Activated CD8-positive, alpha-beta T cell treated with anti-CD3 and anti-CD28 coated beads for 36 hours (primary cell): ENCODE measurements at regions of chr5 and their contacts with region 1.

Region 1: DNA sequence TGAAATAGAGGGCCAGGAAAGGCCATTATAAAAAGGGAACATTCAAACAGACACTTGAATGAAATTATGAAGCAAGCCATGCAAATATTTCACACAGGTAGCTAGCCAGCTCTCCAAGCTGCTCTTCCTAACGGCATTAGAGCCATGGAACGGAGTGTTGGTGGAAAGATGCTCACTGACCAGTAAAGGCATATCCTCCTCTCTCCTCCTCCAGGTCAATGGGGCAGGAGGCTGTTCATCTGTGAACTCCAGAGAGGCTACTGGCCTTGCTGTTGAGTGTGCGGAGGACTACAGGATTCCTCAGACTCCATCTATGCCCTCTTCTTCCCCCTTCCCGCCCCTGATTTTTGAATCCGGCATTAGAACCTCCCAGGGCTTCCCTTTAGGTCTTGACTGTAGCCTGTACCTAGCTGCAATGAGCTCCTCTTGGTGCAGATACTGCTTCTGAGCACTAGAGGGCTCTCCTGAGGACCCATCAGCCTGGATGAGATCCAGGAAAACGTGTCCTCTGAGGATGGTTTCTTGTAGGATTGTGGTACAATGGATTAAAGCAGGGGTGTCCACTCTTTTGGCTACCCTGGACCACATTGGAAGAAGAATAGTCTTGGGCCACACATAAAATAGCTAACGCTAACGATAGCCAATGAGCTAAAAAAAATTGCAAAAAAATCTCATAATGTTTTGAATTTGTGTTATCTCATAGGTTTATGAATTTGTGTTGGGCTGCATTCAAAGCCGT is 162.2 kb downstream of the SREK1 start:
- DNase-seq: peak; percentile 43
- ATAC-seq: peak; percentile 82
- H3K4me3 Mint-ChIP-seq: no peak overlapping the region
- H3K27ac Mint-ChIP-seq: no peak overlapping the region
- H3K4me1 Mint-ChIP-seq: no peaks in the 10 kb centered on the region
- H3K27me3 Mint-ChIP-seq: peaks cover 5% of the 10 kb centered on the region
- CTCF ChIP-seq: peak; percentile 80

Region 2: DNA sequence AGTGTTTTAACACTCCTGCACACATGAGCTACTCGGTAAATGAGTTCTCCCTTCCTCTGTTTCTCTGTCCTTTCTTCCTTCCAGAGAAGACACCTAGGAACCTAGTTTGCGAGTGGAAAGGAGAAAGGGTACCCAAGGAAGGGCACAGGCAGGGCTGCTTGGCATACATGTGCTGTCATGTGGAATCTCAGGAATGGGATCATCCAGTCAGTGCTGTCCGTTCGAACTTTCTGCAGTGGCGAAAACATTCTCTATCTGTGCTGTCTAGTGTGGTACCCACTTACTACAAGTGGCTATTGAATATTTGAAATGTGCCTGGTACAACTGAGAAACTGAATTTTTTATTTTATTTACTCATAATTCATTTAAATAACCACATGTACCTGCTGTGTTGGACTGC is 556.3 kb before region 1 on chr5:
- CTCF ChIA-PET with region 1: no interaction called
- POLR2A ChIA-PET with region 1: no interaction called
- intact Hi-C with region 1: no loop called
- DNase-seq: no peak
- ATAC-seq: no peak
- H3K4me3 Mint-ChIP-seq: no peak overlapping the region
- H3K27ac Mint-ChIP-seq: no peak overlapping the region
- H3K4me1 Mint-ChIP-seq: peaks cover 4% of the 10 kb centered on the region
- H3K27me3 Mint-ChIP-seq: no peaks in the 10 kb centered on the region
- CTCF ChIP-seq: no peak

Region 3: DNA sequence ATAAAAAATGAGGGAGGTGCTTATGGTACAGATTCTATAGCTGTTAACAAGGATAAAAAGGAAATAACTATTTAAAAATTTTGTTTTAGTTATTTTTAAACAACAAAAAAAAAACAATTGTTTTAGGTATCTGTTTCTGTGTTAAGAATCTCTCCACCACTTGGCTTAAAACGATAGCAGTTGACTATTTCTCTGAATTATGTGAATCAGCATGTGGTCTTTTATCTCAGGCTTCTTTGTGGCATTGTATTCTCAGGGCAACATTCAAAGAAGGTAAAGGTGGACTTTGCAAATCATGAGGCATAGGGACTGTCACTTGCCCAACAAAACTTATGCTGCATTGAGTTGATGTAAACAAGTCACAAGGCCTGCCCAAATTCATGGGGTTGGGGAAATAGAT is 324.7 kb before region 1 on chr5:
- CTCF ChIA-PET with region 1: no interaction called
- POLR2A ChIA-PET with region 1: no interaction called
- intact Hi-C with region 1: no loop called
- DNase-seq: no peak
- ATAC-seq: peak; percentile 39
- H3K4me3 Mint-ChIP-seq: no peak overlapping the region
- H3K27ac Mint-ChIP-seq: peak overlapping the region; percentile 57
- H3K4me1 Mint-ChIP-seq: peaks cover 54% of the 10 kb centered on the region
- H3K27me3 Mint-ChIP-seq: no peaks in the 10 kb centered on the region
- CTCF ChIP-seq: no peak

Region 4: DNA sequence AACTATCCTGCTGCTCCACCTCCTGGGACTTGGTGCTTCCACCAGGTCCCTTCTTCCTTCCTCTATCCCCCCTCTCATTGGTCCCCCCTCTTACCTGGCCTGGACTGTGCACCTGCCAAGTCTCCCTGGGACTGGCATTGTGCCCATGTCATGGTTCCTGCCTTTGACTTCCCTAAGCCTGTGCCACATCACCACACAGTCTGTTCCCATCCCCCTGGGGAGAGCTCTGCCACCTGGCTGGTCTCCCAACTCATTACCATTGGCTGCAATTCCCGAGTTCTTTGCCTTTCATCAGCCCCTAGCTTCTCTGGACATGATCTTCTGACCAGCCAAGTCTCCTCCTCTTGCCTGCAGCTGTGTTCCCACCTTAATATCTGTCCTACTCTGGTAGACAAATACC is 18.1 kb after region 1 on chr5:
- CTCF ChIA-PET with region 1: interaction called, 73 read pairs
- POLR2A ChIA-PET with region 1: no interaction called
- intact Hi-C with region 1: no loop called
- DNase-seq: no peak
- ATAC-seq: no peak
- H3K4me3 Mint-ChIP-seq: no peak overlapping the region
- H3K27ac Mint-ChIP-seq: no peak overlapping the region
- H3K4me1 Mint-ChIP-seq: peaks cover 7% of the 10 kb centered on the region
- H3K27me3 Mint-ChIP-seq: peaks cover 1% of the 10 kb centered on the region
- CTCF ChIP-seq: no peak

Region 5: GRCh38 chr5:66343370-66344071 is 37.2 kb after region 1 on chr5:
- CTCF ChIA-PET with region 1: interaction called, 27 read pairs
- POLR2A ChIA-PET with region 1: no interaction called
- intact Hi-C with region 1: no loop called
- DNase-seq: no peak
- ATAC-seq: no peak
- H3K4me3 Mint-ChIP-seq: no peak overlapping the region
- H3K27ac Mint-ChIP-seq: no peak overlapping the region
- H3K4me1 Mint-ChIP-seq: no peaks in the 10 kb centered on the region
- H3K27me3 Mint-ChIP-seq: peaks cover 2% of the 10 kb centered on the region
- CTCF ChIP-seq: no peak

Region 6: GRCh38 chr5:66498791-66499207 is 192.5 kb after region 1 on chr5:
- CTCF ChIA-PET with region 1: interaction called, 16 read pairs
- POLR2A ChIA-PET with region 1: no interaction called
- intact Hi-C with region 1: no loop called
- DNase-seq: peak; percentile 3
- ATAC-seq: no peak
- H3K4me3 Mint-ChIP-seq: no peak overlapping the region
- H3K27ac Mint-ChIP-seq: no peak overlapping the region
- H3K4me1 Mint-ChIP-seq: no peaks in the 10 kb centered on the region
- H3K27me3 Mint-ChIP-seq: peaks cover 3% of the 10 kb centered on the region
- CTCF ChIP-seq: no peak